ENCODE measurements at regions of chr12 and their contacts with region 1.

Region 1: DNA sequence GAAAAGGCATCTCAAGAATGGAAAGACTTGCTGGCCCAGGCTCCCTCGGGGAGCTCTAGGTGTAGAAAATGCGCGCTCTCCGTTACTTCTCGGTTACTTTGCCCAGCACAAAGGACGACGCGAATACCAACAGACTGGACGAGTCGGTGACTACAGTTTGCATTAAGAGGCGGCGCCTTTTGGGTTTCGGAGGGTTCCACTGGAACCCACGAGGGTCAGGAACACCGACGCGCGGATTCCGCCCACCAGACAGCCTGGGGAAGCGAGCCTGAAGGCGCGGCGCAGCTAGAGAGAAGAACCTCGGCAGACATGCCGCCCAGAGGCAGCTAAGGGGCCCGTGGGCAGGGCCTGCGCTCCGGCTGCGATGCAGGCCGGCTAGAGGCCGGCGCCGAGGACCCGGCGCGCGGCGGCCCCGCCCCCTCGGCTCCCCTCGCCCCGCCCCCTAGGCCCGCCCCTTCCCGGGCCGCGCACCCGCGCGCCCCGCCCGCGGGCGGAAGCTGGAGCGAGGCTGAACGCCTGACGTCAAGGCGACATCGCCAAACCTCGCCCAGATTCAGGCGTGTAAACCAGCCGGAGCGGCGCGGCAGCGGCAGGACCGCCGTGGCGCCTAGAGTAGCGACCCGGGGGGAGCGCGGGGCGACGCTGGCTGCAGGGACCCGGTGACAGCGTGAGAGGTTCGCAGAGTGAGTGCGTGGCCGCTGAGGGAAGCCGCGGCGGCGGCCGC is at the start of gene RAP1B:
- DNase-seq: peak; percentile 91 to 96 (median 96)
- ATAC-seq: peak; percentile 96 to 98
- H3K4me3 ChIP-seq: peak within 1 kb of the TSS; percentile 88
- H3K27ac ChIP-seq: peak within 1 kb of the TSS; percentile 100
- H3K4me1 ChIP-seq: peaks cover 8% of the 10 kb centered on the region
- H3K27me3 ChIP-seq: no peaks in the 10 kb centered on the region
- total RNA-seq, gene RAP1B: 65.7 to 87.5 (median 68.7) TPM

Region 2: GRCh38 chr12:68303850-68304249 is 306.7 kb before region 1 on chr12:
- intact Hi-C with region 1: no loop called
- DNase-seq: peak; percentile 25 to 56 (median 56)
- ATAC-seq: peak; percentile 67 to 88
- H3K4me3 ChIP-seq: no peak overlapping the region
- H3K27ac ChIP-seq: no peak overlapping the region
- H3K4me1 ChIP-seq: no peaks in the 10 kb centered on the region
- H3K27me3 ChIP-seq: no peaks in the 10 kb centered on the region

Region 3: GRCh38 chr12:68364893-68365725 is 245.4 kb before region 1 on chr12:
- intact Hi-C with region 1: loop called in 2 of 4 experiments (anchors 5 to 10 kb)
- DNase-seq: peak; percentile 95 to 96 (median 96)
- ATAC-seq: peak; percentile 98 to 99
- H3K4me3 ChIP-seq: peak overlapping the region; percentile 20
- H3K27ac ChIP-seq: peak overlapping the region; percentile 86
- H3K4me1 ChIP-seq: no peaks in the 10 kb centered on the region
- H3K27me3 ChIP-seq: no peaks in the 10 kb centered on the region

Region 4: DNA sequence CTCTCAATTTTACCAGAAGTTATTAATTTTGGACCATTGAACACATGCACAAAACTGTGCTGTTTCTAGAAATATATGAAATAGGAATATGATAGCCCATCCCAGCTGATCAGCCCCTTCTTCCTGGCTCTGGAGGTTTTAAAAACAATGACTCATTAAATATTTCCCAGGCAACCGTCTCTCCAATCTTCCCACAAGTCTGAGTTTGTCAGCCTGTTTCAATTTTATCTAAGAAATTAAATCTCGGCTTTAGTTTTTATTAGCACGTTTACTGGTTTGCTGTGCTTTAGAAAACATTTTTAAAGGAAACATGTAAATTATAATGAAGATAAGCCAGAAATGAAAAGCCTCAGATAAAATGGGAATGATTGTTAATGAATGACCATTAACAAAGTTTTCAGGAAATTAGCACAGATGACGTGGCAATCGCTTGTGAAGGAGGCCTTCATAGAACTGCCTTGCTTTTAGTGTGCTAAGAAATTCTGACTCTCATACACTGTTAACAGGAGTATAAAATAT is 89.2 kb before region 1 on chr12:
- intact Hi-C with region 1: loop called in 1 of 4 experiments (anchors 5 kb)
- DNase-seq: no peak
- ATAC-seq: peak; percentile 65 to 88
- H3K4me3 ChIP-seq: no peak overlapping the region
- H3K27ac ChIP-seq: no peak overlapping the region
- H3K4me1 ChIP-seq: no peaks in the 10 kb centered on the region
- H3K27me3 ChIP-seq: no peaks in the 10 kb centered on the region

Region 5: DNA sequence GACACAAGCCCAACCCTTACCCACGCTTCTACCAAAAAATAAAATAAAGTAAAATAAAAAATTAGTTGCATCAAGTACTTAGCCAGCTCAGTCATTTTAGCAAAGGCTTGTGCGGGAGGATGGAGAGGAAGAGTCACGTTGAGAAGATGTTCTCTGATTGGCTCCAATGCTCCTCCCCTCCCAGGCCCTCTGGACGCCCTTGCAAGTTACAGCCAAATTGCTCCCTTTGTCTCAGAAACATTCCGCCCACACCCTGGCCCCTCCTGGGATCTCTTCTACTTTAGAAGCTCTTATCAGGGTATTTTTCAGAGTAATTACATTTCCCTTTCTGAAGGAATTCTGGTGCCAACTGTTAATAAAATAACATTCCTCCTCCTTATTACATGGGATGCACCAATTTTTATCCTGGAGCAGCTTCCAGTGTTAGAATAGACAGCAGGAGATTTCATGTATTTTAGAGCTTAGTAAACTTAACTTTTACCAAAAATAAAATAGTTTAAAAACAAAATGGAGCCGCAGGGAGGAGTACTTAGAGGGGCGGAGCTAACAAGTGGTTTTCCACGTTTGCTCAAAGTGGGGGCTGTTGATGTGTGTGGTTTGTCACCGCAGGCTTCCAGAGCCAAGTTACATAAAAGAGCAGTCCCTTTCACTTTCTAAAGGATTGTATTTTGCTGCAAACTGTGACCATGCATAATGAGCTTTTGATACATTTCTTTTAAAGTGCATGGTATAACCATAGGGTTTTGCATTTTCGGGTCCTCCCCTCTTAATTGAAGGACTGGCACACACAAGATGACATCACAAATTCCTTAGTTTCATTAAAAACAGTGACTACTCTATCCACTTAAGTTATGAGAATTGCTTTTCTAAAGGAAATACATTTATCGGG is 71.6 kb before region 1 on chr12:
- intact Hi-C with region 1: loop called in 1 of 4 experiments (anchors 10 kb)
- DNase-seq: peak; percentile 85 to 93 (median 88)
- ATAC-seq: peak; percentile 97 to 99
- H3K4me3 ChIP-seq: peak overlapping the region; percentile 47
- H3K27ac ChIP-seq: peak overlapping the region; percentile 88
- H3K4me1 ChIP-seq: no peaks in the 10 kb centered on the region
- H3K27me3 ChIP-seq: no peaks in the 10 kb centered on the region

Region 6: GRCh38 chr12:68686595-68687521 is 76.3 kb after region 1 on chr12 and contains the start of gene NUP107:
- intact Hi-C with region 1: loop called in 1 of 4 experiments (anchors 5 kb)
- DNase-seq: peak; percentile 99 to 100 (median 100)
- ATAC-seq: peak; percentile 98 to 99
- H3K4me3 ChIP-seq: peak within 1 kb of the TSS; percentile 59
- H3K27ac ChIP-seq: peak within 1 kb of the TSS; percentile 87
- H3K4me1 ChIP-seq: no peaks in the 10 kb centered on the region
- H3K27me3 ChIP-seq: no peaks in the 10 kb centered on the region
- total RNA-seq, gene NUP107: 21.8 to 30.3 (median 25.6) TPM